AG04450 (cell line): ENCODE measurements at regions of chr5 and their contacts with region 1.

Region 1: DNA sequence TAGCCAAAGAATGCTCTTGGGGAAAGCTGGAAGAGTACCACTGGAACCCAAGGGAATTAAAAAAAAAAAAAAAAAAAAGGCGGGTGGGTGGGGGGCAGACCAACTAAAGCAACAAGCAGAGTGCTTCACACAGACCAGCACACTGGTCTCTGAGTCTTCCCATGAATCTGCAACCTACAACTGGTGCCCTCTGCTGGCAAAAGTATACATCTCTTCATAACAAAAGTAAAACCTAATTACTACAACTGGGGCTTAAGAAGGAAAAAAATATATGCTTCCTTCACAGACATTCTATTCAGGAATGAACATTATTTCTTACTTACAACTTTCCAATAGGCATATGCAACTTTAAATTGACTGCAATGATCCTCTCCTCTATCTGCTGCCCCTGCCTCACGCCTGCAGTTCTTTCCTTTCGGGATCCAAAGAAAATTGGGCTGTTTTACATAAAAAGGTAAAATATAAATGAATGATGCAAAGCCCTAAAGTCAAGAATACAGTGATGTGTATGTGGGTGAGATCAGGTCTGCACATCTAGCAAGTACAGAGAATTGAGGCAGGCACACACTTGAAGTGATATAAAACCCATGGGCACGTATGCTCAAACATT is 7.2 kb upstream of the KLHL3 start:
- DNase-seq: no peak
- H3K4me3 ChIP-seq: no peak overlapping the region
- H3K27ac ChIP-seq: no peak overlapping the region
- H3K27me3 ChIP-seq: no peaks in the 10 kb centered on the region
- CTCF ChIP-seq: peak; percentile 75

Region 2: GRCh38 chr5:137635521-137635921 is 107.6 kb before region 1 on chr5:
- CTCF ChIA-PET with region 1: interaction called, 271 read pairs
- POLR2A ChIA-PET with region 1: no interaction called
- DNase-seq: no peak
- H3K4me3 ChIP-seq: no peak overlapping the region
- H3K27ac ChIP-seq: no peak overlapping the region
- H3K27me3 ChIP-seq: no peaks in the 10 kb centered on the region
- CTCF ChIP-seq: no peak

Region 3: GRCh38 chr5:137665678-137666460 is 77.3 kb before region 1 on chr5:
- CTCF ChIA-PET with region 1: interaction called, 454 read pairs
- POLR2A ChIA-PET with region 1: interaction called, 4 read pairs
- DNase-seq: no peak
- H3K4me3 ChIP-seq: no peak overlapping the region
- H3K27ac ChIP-seq: no peak overlapping the region
- H3K27me3 ChIP-seq: no peaks in the 10 kb centered on the region
- CTCF ChIP-seq: no peak

Region 4: DNA sequence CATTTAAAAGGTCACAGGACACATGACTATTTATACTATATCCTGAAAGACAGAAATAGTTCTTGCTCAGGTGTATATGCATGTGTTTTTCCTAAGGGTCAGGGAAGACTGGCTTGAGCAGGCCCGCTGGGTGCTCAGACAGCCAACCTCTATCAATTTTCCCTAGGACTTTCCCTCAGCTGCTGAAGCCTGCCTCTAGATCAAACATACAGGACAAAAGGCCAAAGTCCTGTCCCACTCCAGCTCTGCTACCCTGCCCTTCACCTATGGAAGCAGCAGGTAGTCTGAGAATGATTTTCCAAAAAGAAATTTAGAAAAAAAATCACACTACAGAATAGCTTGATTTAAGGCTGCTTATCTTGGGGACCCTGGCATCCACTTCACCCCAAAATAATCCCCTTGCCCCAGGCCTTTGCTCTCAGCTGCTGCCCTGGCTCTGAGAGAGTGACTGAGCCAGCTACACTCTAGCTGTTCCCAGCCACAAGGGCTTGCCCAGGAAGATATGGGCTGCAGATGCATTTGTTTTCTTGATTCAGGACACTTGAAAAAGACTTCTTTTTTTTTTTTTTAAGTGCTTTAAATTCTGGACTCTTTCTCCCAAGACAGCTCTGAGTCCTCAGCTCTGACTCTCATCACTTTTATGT is 49.7 kb before region 1 on chr5:
- CTCF ChIA-PET with region 1: no interaction called
- POLR2A ChIA-PET with region 1: no interaction called
- DNase-seq: no peak
- H3K4me3 ChIP-seq: no peak overlapping the region
- H3K27ac ChIP-seq: no peak overlapping the region
- H3K27me3 ChIP-seq: no peaks in the 10 kb centered on the region
- CTCF ChIP-seq: no peak

Region 5: DNA sequence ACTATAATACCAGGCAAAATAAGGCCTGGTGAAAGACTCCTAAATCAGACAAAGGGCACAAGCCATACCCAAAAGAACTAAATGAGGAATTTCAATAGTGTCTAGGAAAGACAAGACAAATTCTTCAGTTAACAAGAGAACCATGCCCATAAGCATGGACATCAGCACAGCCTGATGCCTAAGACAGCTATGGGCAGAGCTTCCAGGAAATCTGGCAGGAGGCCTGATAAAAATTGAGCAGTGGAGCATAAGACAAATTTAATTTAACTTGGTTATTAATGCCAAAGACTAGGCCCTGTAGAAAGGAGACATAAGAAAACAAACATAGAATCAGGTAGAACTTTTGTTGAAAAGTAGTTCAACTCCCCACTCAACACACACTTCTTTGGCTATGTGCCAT is 24.5 kb before region 1 on chr5:
- CTCF ChIA-PET with region 1: interaction called, 12 read pairs
- POLR2A ChIA-PET with region 1: no interaction called
- DNase-seq: no peak
- H3K4me3 ChIP-seq: no peak overlapping the region
- H3K27ac ChIP-seq: no peak overlapping the region
- H3K27me3 ChIP-seq: no peaks in the 10 kb centered on the region
- CTCF ChIP-seq: no peak

Region 6: DNA sequence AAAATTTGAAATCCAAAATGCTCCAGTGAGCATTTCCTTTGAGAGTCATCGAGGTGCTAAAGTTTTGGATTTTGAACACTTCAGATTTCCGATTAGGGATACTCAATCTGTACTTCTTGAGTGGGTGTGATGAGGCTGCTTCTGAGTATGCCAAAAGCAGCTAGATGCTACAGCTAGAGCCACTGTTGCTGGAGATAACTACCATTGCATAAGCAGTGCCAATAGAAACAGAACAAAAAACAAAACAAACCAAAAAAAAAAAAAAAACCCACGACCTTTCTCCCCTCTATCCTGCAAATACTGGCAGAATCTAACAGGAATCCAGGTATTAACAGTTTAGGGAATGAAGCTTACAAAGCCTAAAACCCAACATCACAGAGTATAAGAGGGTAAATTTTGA is 189.7 kb after region 1 on chr5:
- CTCF ChIA-PET with region 1: no interaction called
- POLR2A ChIA-PET with region 1: no interaction called
- DNase-seq: no peak
- H3K4me3 ChIP-seq: no peak overlapping the region
- H3K27ac ChIP-seq: no peak overlapping the region
- H3K27me3 ChIP-seq: no peaks in the 10 kb centered on the region
- CTCF ChIP-seq: no peak